Activated naive CD8-positive, alpha-beta T cell treated with anti-CD3 and anti-CD28 coated beads, Interleukin-2, amount 10 ng/mL, durations not matched to agents 7 days and 5 days (primary cell): ENCODE measurements at regions of chr10 and their contacts with region 1.

Region 1: GRCh38 chr10:47311932-47312662 is 10.2 kb upstream of the GDF2 start:
- DNase-seq: peak; percentile 86
- ATAC-seq: peak; percentile 71
- H3K4me3 Mint-ChIP-seq: peak overlapping the region; percentile 47
- H3K27ac Mint-ChIP-seq: peak overlapping the region; percentile 89
- H3K4me1 Mint-ChIP-seq: peaks cover 18% of the 10 kb centered on the region
- H3K27me3 Mint-ChIP-seq: no peaks in the 10 kb centered on the region

Region 2: GRCh38 chr10:47047671-47048525 is 264.2 kb before region 1 on chr10:
- POLR2A ChIA-PET with region 1: interaction called, 27 read pairs
- DNase-seq: peak; percentile 85
- ATAC-seq: peak; percentile 65
- H3K4me3 Mint-ChIP-seq: no peak overlapping the region
- H3K27ac Mint-ChIP-seq: peak overlapping the region; percentile 66
- H3K4me1 Mint-ChIP-seq: peaks cover 12% of the 10 kb centered on the region
- H3K27me3 Mint-ChIP-seq: no peaks in the 10 kb centered on the region

Region 3: GRCh38 chr10:47326306-47326926 is 14.3 kb after region 1 on chr10:
- POLR2A ChIA-PET with region 1: no interaction called
- DNase-seq: peak; percentile 10
- ATAC-seq: no peak
- H3K4me3 Mint-ChIP-seq: no peak overlapping the region
- H3K27ac Mint-ChIP-seq: no peak overlapping the region
- H3K4me1 Mint-ChIP-seq: peaks cover 1% of the 10 kb centered on the region
- H3K27me3 Mint-ChIP-seq: peaks cover 2% of the 10 kb centered on the region